Kidney (tissue), 22 donors: ENCODE measurements at regions of chr3 and their contacts with region 1.

Region 1: DNA sequence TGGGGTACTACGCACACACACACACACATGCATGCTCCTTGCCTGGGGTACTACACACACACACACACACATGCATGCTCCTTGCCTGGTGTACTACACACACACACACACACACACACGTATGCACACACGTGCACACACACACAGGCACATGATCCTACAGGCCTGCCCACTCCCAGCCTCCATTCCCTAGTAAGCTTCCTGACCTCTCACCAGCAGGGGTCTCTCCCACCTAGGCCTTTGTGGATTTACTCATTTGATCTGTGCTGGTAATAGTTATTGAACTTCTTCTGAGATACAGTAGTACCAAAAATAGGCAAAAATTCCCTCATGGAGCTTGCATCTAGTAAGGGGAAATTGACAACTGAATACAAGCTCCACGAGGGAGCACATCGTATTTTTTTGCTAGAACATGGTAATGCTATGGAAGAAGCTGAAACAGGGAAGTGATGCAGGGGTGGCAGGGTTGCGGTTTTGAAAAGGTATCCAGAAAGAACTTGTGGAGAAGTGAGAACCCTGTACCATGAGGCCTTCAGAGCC is 19.1 kb downstream of the TTC21A start:
- DNase-seq: peak in 4 of 5 donors; percentile 27 to 71 (median 46)
- H3K4me3 ChIP-seq: no peak overlapping the region
- H3K27ac ChIP-seq: no peak overlapping the region
- H3K4me1 ChIP-seq: peaks cover 0 to 7% (median 0%) of the 10 kb centered on the region in 3 donors
- H3K27me3 ChIP-seq: no peaks in the 10 kb centered on the region
- CTCF ChIP-seq: peak; percentile 58

Region 2: DNA sequence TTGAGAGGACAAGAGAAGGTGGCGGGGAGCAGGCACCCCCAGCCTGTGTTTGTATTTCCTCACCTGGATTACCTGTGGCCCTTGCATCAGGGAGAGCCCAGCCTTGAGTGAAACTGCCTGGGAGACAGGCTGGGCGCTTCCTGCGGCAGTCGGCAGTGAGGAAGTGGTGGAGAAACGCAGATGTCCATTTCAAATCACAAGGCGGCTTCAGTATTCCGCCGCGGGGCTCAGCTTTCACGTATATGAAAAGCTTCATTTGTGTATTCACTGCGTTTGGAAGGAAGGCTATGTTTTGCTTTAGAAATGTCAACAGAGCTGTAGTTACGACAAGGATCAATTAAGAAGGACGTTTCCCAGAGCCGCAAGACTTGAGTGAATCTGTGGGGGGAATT is 1432.3 kb before region 1 on chr3:
- intact Hi-C with region 1: no loop called
- DNase-seq: peak in 3 of 5 donors; percentile 42 to 92 (median 66)
- H3K4me3 ChIP-seq: no peak overlapping the region
- H3K27ac ChIP-seq: no peak overlapping the region
- H3K4me1 ChIP-seq: peaks cover 0 to 6% (median 0%) of the 10 kb centered on the region in 3 donors
- H3K27me3 ChIP-seq: no peaks in the 10 kb centered on the region
- CTCF ChIP-seq: no peak

Region 3: DNA sequence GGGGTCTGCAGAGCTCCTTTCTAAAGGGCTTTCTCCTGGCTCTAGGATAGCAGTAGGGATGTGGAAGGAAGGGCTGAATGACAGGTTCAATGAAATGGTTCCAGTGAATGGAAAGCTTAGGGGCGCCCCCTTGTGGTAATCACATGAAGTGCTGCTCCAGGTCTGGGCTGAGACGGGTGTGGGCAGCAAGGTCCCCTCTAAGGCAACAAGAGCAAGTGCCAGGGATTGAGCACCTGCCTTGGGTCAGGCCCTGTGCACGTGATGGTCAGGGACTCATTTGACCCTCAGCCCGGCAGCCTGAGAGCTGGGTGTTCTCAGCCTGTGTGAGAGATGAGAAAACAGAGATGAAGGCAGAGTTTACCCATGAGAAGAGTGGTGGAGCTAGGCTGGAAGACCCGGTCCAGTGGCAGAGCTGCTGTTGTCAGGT is 165.3 kb after region 1 on chr3:
- intact Hi-C with region 1: loop called (anchors 5 kb)
- DNase-seq: peak in 4 of 5 donors; percentile 52 to 67 (median 63)
- H3K4me3 ChIP-seq: no peak overlapping the region
- H3K27ac ChIP-seq: no peak overlapping the region
- H3K4me1 ChIP-seq: no peaks in the 10 kb centered on the region
- H3K27me3 ChIP-seq: no peaks in the 10 kb centered on the region
- CTCF ChIP-seq: peak; percentile 86

Region 4: DNA sequence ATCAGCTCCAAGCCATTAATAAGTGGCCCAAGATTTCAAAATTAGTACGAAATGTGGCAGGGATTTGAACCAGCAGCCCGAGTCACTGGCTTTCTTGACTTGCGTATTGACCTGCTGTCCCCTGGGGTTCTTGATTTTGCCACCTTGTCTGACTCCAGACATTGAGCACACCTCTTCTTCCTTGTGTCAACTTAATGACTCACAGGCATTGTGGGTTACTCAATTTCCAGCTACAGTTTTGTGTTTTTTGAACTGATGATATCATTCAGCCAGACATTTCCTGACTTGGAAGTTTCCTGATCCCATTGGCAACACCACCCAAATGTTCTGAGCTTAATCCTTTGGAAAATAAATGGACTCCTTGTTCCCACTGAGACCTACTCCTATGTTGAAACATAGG is 405.0 kb after region 1 on chr3:
- intact Hi-C with region 1: no loop called
- DNase-seq: no peak
- H3K4me3 ChIP-seq: no peak overlapping the region
- H3K27ac ChIP-seq: no peak overlapping the region
- H3K4me1 ChIP-seq: no peaks in the 10 kb centered on the region
- H3K27me3 ChIP-seq: no peaks in the 10 kb centered on the region
- CTCF ChIP-seq: no peak